Activated CD4-positive, alpha-beta memory T cell treated with anti-CD3 and anti-CD28 coated beads for 36 hours (primary cell): ENCODE measurements at regions of chr17 and their contacts with region 1.

Region 1: GRCh38 chr17:80292521-80292971 is 31.9 kb downstream of the RNF213 start:
- DNase-seq: no peak
- H3K4me3 Mint-ChIP-seq: no peak overlapping the region
- H3K27ac Mint-ChIP-seq: peak overlapping the region; percentile 60
- H3K4me1 Mint-ChIP-seq: peaks cover 2% of the 10 kb centered on the region
- H3K27me3 Mint-ChIP-seq: no peaks in the 10 kb centered on the region

Region 2: GRCh38 chr17:80260069-80260554 is 32.4 kb before region 1 on chr17:
- CTCF ChIA-PET with region 1: no interaction called
- POLR2A ChIA-PET with region 1: no interaction called
- intact Hi-C with region 1: no loop called
- DNase-seq: peak; percentile 82
- H3K4me3 Mint-ChIP-seq: peak overlapping the region; percentile 85
- H3K27ac Mint-ChIP-seq: peak overlapping the region; percentile 97
- H3K4me1 Mint-ChIP-seq: peaks cover 59% of the 10 kb centered on the region
- H3K27me3 Mint-ChIP-seq: no peaks in the 10 kb centered on the region

Region 3: GRCh38 chr17:80359422-80360110 is 67.0 kb after region 1 on chr17:
- CTCF ChIA-PET with region 1: no interaction called
- POLR2A ChIA-PET with region 1: no interaction called
- intact Hi-C with region 1: loop called (anchors 10 kb)
- DNase-seq: no peak
- H3K4me3 Mint-ChIP-seq: no peak overlapping the region
- H3K27ac Mint-ChIP-seq: peak overlapping the region; percentile 65
- H3K4me1 Mint-ChIP-seq: no peaks in the 10 kb centered on the region
- H3K27me3 Mint-ChIP-seq: no peaks in the 10 kb centered on the region